Heart right ventricle (tissue), 16 donors: ENCODE measurements at regions of chr1 and their contacts with region 1.

Region 1: GRCh38 chr1:87426463-87427249 is 98.0 kb downstream of the LMO4 start:
- DNase-seq: peak in 1 of 2 donors; percentile 28
- ATAC-seq: peak in 7 of 8 donors; percentile 28 to 82 (median 61)
- H3K4me3 ChIP-seq: no peak overlapping the region
- H3K27ac ChIP-seq: peak overlapping the region in 2 of 10 donors; percentile 10 to 35
- H3K4me1 ChIP-seq: peaks cover 0 to 8% (median 0%) of the 10 kb centered on the region in 9 donors
- H3K27me3 ChIP-seq: no peaks in the 10 kb centered on the region
- CTCF ChIP-seq: no peak

Region 2: GRCh38 chr1:87402241-87403002 is 24.2 kb before region 1 on chr1:
- intact Hi-C with region 1: loop called in 1 of 10 experiments (anchors 2 kb)
- DNase-seq: peak in 1 of 2 donors; percentile 21
- ATAC-seq: peak in 5 of 8 donors; percentile 37 to 78 (median 58)
- H3K4me3 ChIP-seq: no peak overlapping the region
- H3K27ac ChIP-seq: peak overlapping the region in 5 of 10 donors; percentile 9 to 46 (median 18)
- H3K4me1 ChIP-seq: peaks cover 0 to 17% (median 4%) of the 10 kb centered on the region in 9 donors
- H3K27me3 ChIP-seq: no peaks in the 10 kb centered on the region
- CTCF ChIP-seq: no peak